Activated CD4-positive, alpha-beta memory T cell treated with anti-CD3 and anti-CD28 coated beads for 36 hours (primary cell): ENCODE measurements at regions of chr9 and their contacts with region 1.

Region 1: GRCh38 chr9:121201738-121202533 is at the start of gene RAB14:
- DNase-seq: peak; percentile 100
- H3K4me3 Mint-ChIP-seq: peak within 1 kb of the TSS; percentile 90
- H3K27ac Mint-ChIP-seq: peak within 1 kb of the TSS; percentile 95
- H3K4me1 Mint-ChIP-seq: peaks cover 39% of the 10 kb centered on the region
- H3K27me3 Mint-ChIP-seq: no peaks in the 10 kb centered on the region
- total RNA-seq, gene RAB14: 58.2 to 58.5 TPM

Region 2: GRCh38 chr9:120579750-120580590 is 622.0 kb before region 1 on chr9 and contains the start of gene CDK5RAP2:
- CTCF ChIA-PET with region 1: no interaction called
- POLR2A ChIA-PET with region 1: no interaction called
- intact Hi-C with region 1: loop called (anchors 1 kb)
- DNase-seq: peak; percentile 96
- H3K4me3 Mint-ChIP-seq: peak within 1 kb of the TSS; percentile 97
- H3K27ac Mint-ChIP-seq: peak within 1 kb of the TSS; percentile 85
- H3K4me1 Mint-ChIP-seq: peaks cover 45% of the 10 kb centered on the region
- H3K27me3 Mint-ChIP-seq: no peaks in the 10 kb centered on the region
- total RNA-seq, gene CDK5RAP2: 75.3 to 75.9 TPM

Region 3: GRCh38 chr9:120892748-120893610 is 309.0 kb before region 1 on chr9:
- CTCF ChIA-PET with region 1: no interaction called
- POLR2A ChIA-PET with region 1: no interaction called
- intact Hi-C with region 1: loop called (anchors 2 kb)
- DNase-seq: peak; percentile 81
- H3K4me3 Mint-ChIP-seq: peak overlapping the region; percentile 62
- H3K27ac Mint-ChIP-seq: peak overlapping the region; percentile 95
- H3K4me1 Mint-ChIP-seq: peaks cover 84% of the 10 kb centered on the region
- H3K27me3 Mint-ChIP-seq: no peaks in the 10 kb centered on the region

Region 4: GRCh38 chr9:121121582-121122087 is 80.3 kb before region 1 on chr9:
- CTCF ChIA-PET with region 1: interaction called, 5 read pairs
- POLR2A ChIA-PET with region 1: interaction called, 5 read pairs
- intact Hi-C with region 1: loop called (anchors 2 kb)
- DNase-seq: peak; percentile 99
- H3K4me3 Mint-ChIP-seq: peak overlapping the region; percentile 77
- H3K27ac Mint-ChIP-seq: peak overlapping the region; percentile 89
- H3K4me1 Mint-ChIP-seq: peaks cover 48% of the 10 kb centered on the region
- H3K27me3 Mint-ChIP-seq: no peaks in the 10 kb centered on the region

Region 5: GRCh38 chr9:121213136-121213806 is 11.3 kb after region 1 on chr9:
- CTCF ChIA-PET with region 1: interaction called, 29 read pairs
- POLR2A ChIA-PET with region 1: interaction called, 4 read pairs
- intact Hi-C with region 1: no loop called
- DNase-seq: peak; percentile 84
- H3K4me3 Mint-ChIP-seq: no peak overlapping the region
- H3K27ac Mint-ChIP-seq: no peak overlapping the region
- H3K4me1 Mint-ChIP-seq: peaks cover 5% of the 10 kb centered on the region
- H3K27me3 Mint-ChIP-seq: no peaks in the 10 kb centered on the region